T-cell (primary cell): ENCODE measurements at regions of chr6 and their contacts with region 1.

Region 1: GRCh38 chr6:64233746-64234145 is 598.1 kb downstream of the PHF3 start:
- DNase-seq: no peak
- ATAC-seq: no peak
- H3K4me3 ChIP-seq: no peak overlapping the region
- H3K4me3 Mint-ChIP-seq: no peak overlapping the region
- H3K27ac ChIP-seq: no peak overlapping the region
- H3K27ac Mint-ChIP-seq: no peak overlapping the region
- H3K4me1 ChIP-seq: no peaks in the 10 kb centered on the region
- H3K4me1 Mint-ChIP-seq: no peaks in the 10 kb centered on the region
- H3K27me3 ChIP-seq: no peaks in the 10 kb centered on the region
- H3K27me3 Mint-ChIP-seq: no peaks in the 10 kb centered on the region

Region 2: DNA sequence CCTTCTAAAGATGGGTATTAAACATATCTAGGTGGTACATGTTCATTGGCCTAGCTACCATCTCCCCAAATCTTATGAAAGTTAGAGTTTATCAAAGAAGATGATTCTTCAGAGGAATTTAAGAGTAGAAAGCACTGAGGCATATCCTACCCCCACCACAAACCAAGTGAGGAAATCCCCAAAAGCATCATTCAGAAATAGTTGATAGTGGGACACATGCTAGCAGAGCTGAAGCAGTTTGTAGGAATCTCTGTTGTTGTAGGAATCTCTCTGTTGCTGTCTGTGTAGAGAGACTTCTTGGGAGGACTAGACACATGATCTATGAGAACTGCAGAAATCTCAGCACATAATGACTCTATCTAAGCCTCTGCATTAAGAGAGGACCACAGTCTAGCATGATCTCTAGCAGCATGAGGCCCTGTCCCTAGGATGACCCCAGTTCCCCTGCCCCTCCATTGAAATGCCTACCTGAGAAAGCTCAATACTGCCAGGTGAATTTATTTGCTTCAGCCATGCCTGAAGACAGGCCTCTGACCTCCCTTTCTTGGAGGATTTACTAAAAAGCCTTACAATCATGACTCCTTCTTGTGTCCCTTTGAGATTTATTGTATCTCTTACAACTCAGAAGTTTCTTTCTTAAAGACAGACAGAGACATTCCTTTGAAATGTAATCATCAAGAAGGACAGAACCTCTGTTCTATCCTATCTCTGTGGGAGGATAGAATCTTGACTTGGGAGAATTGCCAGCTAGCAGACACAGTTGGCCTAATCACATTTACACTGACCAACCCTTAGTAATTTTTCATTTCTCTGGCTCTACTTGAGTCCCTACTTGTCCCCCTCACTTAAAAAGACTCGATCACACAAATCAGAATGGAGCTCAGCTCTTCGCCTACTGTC is 15.8 kb before region 1 on chr6:
- CTCF ChIA-PET with region 1: no interaction called
- POLR2A ChIA-PET with region 1: no interaction called
- DNase-seq: no peak
- ATAC-seq: no peak
- H3K4me3 ChIP-seq: no peak overlapping the region
- H3K4me3 Mint-ChIP-seq: no peak overlapping the region
- H3K27ac ChIP-seq: no peak overlapping the region
- H3K27ac Mint-ChIP-seq: no peak overlapping the region
- H3K4me1 ChIP-seq: no peaks in the 10 kb centered on the region
- H3K4me1 Mint-ChIP-seq: no peaks in the 10 kb centered on the region
- H3K27me3 ChIP-seq: no peaks in the 10 kb centered on the region
- H3K27me3 Mint-ChIP-seq: no peaks in the 10 kb centered on the region

Region 3: GRCh38 chr6:64250126-64250525 is 16.4 kb after region 1 on chr6:
- CTCF ChIA-PET with region 1: interaction called in 1 of 2 experiments, 11 read pairs
- POLR2A ChIA-PET with region 1: no interaction called
- DNase-seq: no peak
- ATAC-seq: no peak
- H3K4me3 ChIP-seq: no peak overlapping the region
- H3K4me3 Mint-ChIP-seq: no peak overlapping the region
- H3K27ac ChIP-seq: no peak overlapping the region
- H3K27ac Mint-ChIP-seq: no peak overlapping the region
- H3K4me1 ChIP-seq: no peaks in the 10 kb centered on the region
- H3K4me1 Mint-ChIP-seq: no peaks in the 10 kb centered on the region
- H3K27me3 ChIP-seq: no peaks in the 10 kb centered on the region
- H3K27me3 Mint-ChIP-seq: no peaks in the 10 kb centered on the region